ENCODE measurements at regions of chr9 and their contacts with region 1.

Region 1: DNA sequence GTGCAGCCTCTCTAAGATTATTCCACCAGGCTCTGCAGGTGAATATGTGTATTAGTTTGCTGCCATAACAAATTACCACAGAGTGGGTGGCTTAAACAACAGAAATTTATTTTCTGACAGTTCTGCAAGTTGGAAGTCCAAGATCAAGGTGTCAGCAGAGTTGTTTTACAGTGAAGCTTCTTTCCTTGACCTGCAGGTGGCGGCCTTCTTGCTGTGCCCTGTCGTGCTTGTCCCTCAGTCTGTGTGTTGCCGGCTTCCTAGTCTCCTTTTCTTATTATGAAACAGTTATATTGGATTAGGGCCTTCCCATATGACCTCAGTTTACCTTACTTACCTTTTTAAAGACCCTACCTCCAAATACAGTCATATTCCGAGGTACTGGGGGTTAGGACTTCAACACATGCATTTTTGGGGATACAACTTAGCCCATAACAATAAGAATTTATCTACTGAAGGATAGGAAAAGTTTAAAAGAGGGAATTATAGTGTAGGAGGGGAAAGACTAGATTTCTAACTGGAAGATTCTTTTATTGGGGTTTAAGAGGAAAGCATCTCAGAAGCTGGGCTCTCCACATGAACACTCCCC is 97.4 kb downstream of the OSTF1 start:
- H3K4me3 ChIP-seq: no peak overlapping the region
- H3K27ac ChIP-seq: no peak overlapping the region
- H3K4me1 ChIP-seq: no peaks in the 10 kb centered on the region
- CTCF ChIP-seq: no peak

Region 2: GRCh38 chr9:74985041-74985440 is 200.6 kb before region 1 on chr9:
- CTCF ChIA-PET with region 1: no interaction called
- POLR2A ChIA-PET with region 1: no interaction called
- H3K4me3 ChIP-seq: no peak overlapping the region
- H3K27ac ChIP-seq: no peak overlapping the region
- H3K4me1 ChIP-seq: no peaks in the 10 kb centered on the region
- CTCF ChIP-seq: no peak

Region 3: DNA sequence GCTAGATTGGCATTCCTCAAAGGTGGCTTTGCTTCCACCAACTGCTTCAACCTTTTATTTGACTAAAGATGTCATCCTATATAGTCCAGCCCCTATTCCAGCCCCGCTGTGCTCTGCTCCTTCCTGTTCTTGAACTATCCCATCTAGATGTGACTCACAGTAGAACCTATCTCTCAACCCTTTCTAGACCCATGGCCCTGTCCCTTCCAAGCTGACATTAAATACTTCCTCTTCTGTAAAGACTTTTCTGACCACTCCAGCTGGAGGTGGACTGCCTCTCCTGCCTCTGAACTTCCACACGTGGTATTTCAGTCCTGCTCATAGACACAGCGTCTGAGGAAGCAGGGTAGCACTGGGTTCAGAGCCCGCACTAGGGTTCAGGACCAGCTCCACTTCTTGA is 65.0 kb before region 1 on chr9:
- CTCF ChIA-PET with region 1: no interaction called
- POLR2A ChIA-PET with region 1: no interaction called
- H3K4me3 ChIP-seq: no peak overlapping the region
- H3K27ac ChIP-seq: no peak overlapping the region
- H3K4me1 ChIP-seq: no peaks in the 10 kb centered on the region
- CTCF ChIP-seq: no peak

Region 4: DNA sequence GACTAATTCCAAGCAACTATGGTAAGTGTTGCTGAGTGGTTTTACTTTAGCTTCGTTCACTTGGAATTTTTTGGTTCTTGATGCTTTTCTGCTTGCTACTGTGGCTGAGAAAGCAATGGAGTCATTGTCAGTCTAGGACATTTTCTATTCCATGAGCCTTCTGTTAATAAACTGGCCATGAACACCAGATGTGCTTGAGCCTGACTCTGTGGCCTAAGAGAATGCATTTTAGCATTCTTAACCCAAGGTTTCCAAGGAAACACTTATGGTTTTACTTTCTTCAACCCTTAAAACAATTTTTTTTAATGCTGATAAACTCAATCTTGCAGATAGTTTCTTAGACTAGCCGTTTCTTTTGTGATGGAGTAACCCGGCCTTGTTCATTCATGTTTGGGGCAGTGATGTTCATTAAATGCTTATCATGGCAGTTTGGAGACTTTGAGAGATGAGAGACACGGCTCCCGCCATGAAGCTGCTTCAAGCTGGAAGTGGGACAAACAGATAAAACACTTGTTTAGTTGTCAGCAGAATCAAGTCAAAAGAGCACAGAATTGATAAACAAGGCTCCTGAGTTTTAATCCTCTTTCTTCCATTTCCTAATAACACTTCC is 55.0 kb before region 1 on chr9:
- CTCF ChIA-PET with region 1: interaction called, 12 read pairs
- POLR2A ChIA-PET with region 1: no interaction called
- H3K4me3 ChIP-seq: no peak overlapping the region
- H3K27ac ChIP-seq: no peak overlapping the region
- H3K4me1 ChIP-seq: no peaks in the 10 kb centered on the region
- CTCF ChIP-seq: no peak

Region 5: DNA sequence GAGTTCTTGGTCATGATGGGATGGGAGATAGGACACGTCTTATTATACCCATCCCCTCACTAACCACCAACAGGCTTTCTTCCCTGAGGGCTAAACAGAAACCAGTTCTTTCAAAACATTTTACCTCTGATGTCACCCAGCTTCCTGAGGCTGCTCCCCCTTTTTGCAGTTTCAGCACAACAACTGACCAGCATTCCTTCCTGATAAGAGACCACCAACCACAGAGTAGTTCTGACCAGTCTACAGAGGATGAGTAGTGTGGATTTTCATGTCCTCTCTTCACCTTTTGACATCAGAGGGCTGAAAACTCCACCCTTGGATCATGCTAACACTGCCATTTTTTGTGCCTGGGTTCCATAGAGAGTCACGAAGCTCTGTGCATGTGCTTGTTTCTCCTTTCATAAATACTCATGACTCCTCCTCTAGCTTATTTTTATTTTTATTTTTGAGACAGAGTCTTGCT is 14.7 kb before region 1 on chr9:
- CTCF ChIA-PET with region 1: interaction called, 14 read pairs
- POLR2A ChIA-PET with region 1: no interaction called
- H3K4me3 ChIP-seq: no peak overlapping the region
- H3K27ac ChIP-seq: no peak overlapping the region
- H3K4me1 ChIP-seq: no peaks in the 10 kb centered on the region
- CTCF ChIP-seq: no peak

Region 6: DNA sequence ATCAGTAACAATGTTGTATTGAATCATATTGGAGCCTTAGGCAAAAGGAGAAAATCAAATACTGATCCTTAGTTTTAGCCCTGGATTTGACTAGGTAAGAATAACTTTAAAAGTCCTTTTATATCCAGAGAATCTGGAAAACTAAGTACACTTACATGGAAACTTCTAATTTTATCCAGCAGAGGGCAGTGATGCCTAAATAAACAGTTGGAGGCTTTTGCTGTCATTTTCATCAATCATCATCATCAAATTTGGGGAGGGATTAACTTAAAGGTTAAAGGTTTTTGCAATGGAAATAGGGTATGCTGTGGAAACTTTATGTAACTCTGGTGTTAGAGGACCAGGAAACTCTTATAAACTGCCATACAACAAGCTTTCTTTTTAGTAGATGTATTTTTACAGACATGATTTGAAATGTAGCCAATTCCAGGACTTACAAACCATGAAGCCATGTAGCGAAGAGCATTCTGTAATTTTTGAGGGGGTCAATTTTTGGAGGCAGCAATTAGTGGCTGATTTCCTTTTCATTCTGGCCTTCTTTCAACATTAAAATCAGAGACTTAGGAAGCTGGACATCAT is 15.3 kb after region 1 on chr9:
- CTCF ChIA-PET with region 1: interaction called, 14 read pairs
- POLR2A ChIA-PET with region 1: no interaction called
- H3K4me3 ChIP-seq: no peak overlapping the region
- H3K27ac ChIP-seq: no peak overlapping the region
- H3K4me1 ChIP-seq: no peaks in the 10 kb centered on the region
- CTCF ChIP-seq: no peak

Measured in HEK293 (cell line).